ENCODE measurements at regions of chr11 and their contacts with region 1.

Region 1: GRCh38 chr11:12888525-12889158 is 120.5 kb upstream of the RASSF10 start:
- DNase-seq: peak; percentile 85
- ATAC-seq: peak; percentile 82
- H3K4me3 Mint-ChIP-seq: no peak overlapping the region
- H3K27ac Mint-ChIP-seq: peak overlapping the region; percentile 47; the same call in 1 of the 2 replicates
- H3K4me1 Mint-ChIP-seq: peaks cover 20% of the 10 kb centered on the region
- H3K27me3 Mint-ChIP-seq: no peaks in the 10 kb centered on the region
- CTCF ChIP-seq: peak; percentile 57

Region 2: DNA sequence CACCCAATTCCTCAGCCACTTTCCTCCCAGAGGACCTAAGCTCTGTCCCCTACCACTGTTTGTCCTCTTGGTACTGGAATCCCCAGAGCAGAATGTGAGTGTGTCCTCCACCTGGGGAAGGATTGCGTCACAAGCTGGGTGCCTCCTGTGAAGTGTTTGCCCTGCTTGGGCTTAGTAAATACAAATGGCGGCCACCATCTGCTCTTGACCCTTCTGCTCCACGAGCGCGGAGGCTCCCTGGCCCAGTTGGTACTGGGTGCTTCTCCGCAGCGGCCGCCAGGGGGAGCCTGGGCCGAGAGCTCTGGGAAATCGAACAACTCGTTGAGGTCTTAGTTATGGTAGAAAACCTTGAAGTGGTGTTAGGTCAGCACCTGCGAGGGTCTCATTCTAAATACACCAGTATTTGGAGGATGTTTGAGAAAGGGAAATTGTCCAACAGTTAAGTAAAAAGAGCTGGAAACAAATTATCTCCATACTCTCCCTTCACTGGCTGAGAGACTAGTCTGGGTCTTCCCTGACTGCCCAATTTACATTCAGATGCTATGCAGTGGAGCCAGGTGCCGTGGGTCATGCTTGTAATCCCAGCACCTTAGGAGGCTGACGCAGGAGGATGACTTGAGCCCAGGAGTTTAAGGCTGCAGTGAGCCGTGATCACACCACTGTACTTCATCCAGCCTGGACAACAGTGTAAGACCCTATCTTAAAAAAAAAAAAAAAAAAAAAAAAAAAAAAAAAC is 289.1 kb before region 1 on chr11:
- CTCF ChIA-PET with region 1: interaction called, 13 read pairs
- POLR2A ChIA-PET with region 1: no interaction called
- DNase-seq: peak; percentile 81
- ATAC-seq: peak; percentile 95
- H3K4me3 Mint-ChIP-seq: no peak overlapping the region
- H3K27ac Mint-ChIP-seq: no peak overlapping the region
- H3K4me1 Mint-ChIP-seq: peaks cover 15% of the 10 kb centered on the region
- H3K27me3 Mint-ChIP-seq: no peaks in the 10 kb centered on the region
- CTCF ChIP-seq: peak; percentile 90

Region 3: GRCh38 chr11:12680246-12680939 is 208.2 kb before region 1 on chr11:
- CTCF ChIA-PET with region 1: interaction called, 21 read pairs
- POLR2A ChIA-PET with region 1: interaction called, 4 read pairs
- DNase-seq: peak; percentile 91
- ATAC-seq: peak; percentile 84
- H3K4me3 Mint-ChIP-seq: peak overlapping the region; percentile 70
- H3K27ac Mint-ChIP-seq: peak overlapping the region; percentile 99
- H3K4me1 Mint-ChIP-seq: peaks cover 95% of the 10 kb centered on the region
- H3K27me3 Mint-ChIP-seq: peaks cover 10% of the 10 kb centered on the region
- CTCF ChIP-seq: no peak

Region 4: GRCh38 chr11:12746593-12747097 is 142.0 kb before region 1 on chr11:
- CTCF ChIA-PET with region 1: interaction called, 16 read pairs
- POLR2A ChIA-PET with region 1: no interaction called
- DNase-seq: peak; percentile 87
- ATAC-seq: peak; percentile 94
- H3K4me3 Mint-ChIP-seq: peak overlapping the region; percentile 26; the same call in 1 of the 2 replicates
- H3K27ac Mint-ChIP-seq: peak overlapping the region; percentile 88
- H3K4me1 Mint-ChIP-seq: peaks cover 82% of the 10 kb centered on the region
- H3K27me3 Mint-ChIP-seq: no peaks in the 10 kb centered on the region
- CTCF ChIP-seq: no peak

Region 5: DNA sequence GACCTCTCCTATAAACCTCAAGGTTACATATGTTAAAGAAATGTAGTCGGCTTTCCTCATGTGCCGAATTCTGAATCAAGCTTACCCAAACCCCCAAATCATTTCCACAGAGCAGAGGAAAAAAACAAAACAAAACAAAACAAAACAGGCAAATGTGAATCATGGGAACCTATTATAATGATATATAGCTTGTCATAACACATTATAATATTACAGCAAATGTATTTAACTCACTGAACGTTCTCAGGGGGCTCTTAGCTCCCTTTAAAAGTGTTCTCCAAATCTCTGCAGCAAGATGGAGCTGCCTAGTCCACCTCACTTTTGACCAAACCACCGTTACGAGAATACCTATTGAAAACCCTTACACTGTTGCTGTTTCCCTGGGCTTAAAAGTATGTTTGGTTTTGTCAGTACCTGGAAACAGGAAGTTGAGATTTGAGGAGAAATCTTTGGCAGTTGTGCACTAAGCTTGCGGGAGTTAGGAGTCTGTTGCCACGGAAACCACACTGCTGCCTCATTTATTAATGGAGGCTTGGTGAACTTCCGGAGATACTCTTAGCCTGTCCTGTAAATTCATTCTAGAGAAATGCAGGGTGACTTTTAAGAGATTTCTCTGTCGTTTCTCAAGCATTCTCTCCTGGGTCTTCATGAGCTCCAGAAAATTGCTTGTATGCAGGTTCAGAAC is 46.6 kb before region 1 on chr11:
- CTCF ChIA-PET with region 1: interaction called, 10 read pairs
- POLR2A ChIA-PET with region 1: no interaction called
- DNase-seq: no peak
- ATAC-seq: no peak; the same call in 1 of the 2 replicates
- H3K4me3 Mint-ChIP-seq: no peak overlapping the region
- H3K27ac Mint-ChIP-seq: peak overlapping the region; percentile 73
- H3K4me1 Mint-ChIP-seq: peaks cover 72% of the 10 kb centered on the region
- H3K27me3 Mint-ChIP-seq: no peaks in the 10 kb centered on the region
- CTCF ChIP-seq: no peak

Region 6: DNA sequence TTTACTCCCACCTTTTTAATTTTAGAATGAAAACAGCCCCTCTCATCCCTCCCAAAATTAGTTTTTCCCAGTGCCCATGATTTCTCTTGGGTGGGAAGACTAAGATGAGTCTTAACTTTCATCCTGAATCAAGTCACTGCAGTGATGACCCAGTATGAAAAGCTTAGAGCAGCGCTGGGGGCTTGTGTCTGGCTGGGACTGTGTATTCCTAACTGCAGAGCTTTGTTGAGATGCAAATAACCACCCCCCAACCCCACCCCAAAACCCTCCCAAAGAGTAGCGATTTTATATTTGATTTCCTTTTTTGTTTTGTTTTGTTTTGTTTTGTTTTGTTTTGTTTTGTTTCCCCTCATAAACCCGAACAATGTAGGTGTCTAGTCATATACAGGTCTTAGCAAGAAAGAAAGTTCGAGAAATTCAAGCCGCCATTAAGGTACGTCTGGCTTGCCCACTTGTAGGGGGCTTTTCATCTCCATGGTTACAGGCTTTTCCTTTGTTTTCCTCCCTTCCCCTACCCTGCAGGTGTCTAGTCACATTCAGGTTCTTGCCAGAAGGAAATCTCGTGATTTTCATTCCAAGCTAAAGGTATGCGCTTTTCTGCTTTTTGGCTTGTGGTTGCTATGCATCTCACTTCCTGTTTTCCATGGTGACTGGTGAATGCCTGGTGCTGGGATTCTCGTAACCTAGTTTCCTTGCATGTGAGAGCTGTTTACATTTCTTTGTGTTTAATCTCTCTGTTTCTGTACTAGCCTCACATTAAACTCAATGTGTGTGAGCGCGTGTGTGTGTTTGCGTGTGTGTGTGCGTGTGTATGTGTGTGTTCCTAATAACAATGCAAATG is 24.1 kb before region 1 on chr11:
- CTCF ChIA-PET with region 1: interaction called, 10 read pairs
- POLR2A ChIA-PET with region 1: interaction called, 7 read pairs
- DNase-seq: peak; percentile 53
- ATAC-seq: peak; percentile 86
- H3K4me3 Mint-ChIP-seq: peak overlapping the region; percentile 61
- H3K27ac Mint-ChIP-seq: peak overlapping the region; percentile 100
- H3K4me1 Mint-ChIP-seq: peaks cover 92% of the 10 kb centered on the region
- H3K27me3 Mint-ChIP-seq: no peaks in the 10 kb centered on the region
- CTCF ChIP-seq: no peak

Region 7: GRCh38 chr11:12876340-12876739 is 12.3 kb before region 1 on chr11:
- CTCF ChIA-PET with region 1: interaction called, 19 read pairs
- POLR2A ChIA-PET with region 1: no interaction called
- DNase-seq: no peak
- ATAC-seq: no peak
- H3K4me3 Mint-ChIP-seq: no peak overlapping the region
- H3K27ac Mint-ChIP-seq: no peak overlapping the region
- H3K4me1 Mint-ChIP-seq: peaks cover 40% of the 10 kb centered on the region
- H3K27me3 Mint-ChIP-seq: no peaks in the 10 kb centered on the region
- CTCF ChIP-seq: no peak